Mammary epithelial cell (primary cell): ENCODE measurements at regions of chr14 and their contacts with region 1.

Region 1: GRCh38 chr14:65804752-65805473 is 392.4 kb downstream of the FUT8 start:
- DNase-seq: no peak
- H3K4me3 ChIP-seq: no peak overlapping the region
- H3K27ac ChIP-seq: no peak overlapping the region
- H3K4me1 ChIP-seq: no peaks in the 10 kb centered on the region
- H3K27me3 ChIP-seq: peaks cover 2% of the 10 kb centered on the region
- CTCF ChIP-seq: no peak

Region 2: DNA sequence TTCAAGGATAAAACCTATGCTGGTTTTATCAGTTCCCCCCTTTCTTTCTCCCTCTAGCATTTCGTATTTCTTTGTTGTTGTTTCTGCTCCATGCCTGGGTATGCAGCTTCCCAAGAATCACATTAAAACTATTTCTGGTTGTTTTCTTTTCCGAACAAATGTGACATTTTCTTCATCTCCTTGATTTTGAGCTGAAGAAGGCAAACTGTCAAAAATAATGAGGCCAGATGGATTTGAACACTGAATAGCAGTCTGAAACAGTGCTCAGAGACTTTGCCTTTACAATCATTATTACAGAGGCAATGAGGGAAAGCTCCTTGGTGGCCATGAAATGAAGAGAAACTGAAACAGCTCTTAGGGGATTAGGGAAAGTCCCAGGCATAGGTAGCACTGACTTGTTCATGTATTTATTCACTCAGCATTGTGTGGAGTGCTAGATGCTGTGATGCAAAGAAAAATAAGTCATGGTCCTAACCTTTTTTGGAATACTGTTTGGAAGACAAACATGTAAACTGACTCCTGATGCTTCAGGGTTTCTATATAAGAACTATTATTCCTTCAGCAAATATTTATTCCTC is 72.9 kb before region 1 on chr14:
- CTCF ChIA-PET with region 1: no interaction called
- dilution Hi-C with region 1: no loop called
- in situ Hi-C with region 1: no loop called
- intact Hi-C with region 1: no loop called
- DNase-seq: no peak
- H3K4me3 ChIP-seq: no peak overlapping the region
- H3K27ac ChIP-seq: no peak overlapping the region
- H3K4me1 ChIP-seq: no peaks in the 10 kb centered on the region
- H3K27me3 ChIP-seq: no peaks in the 10 kb centered on the region
- CTCF ChIP-seq: no peak

Region 3: DNA sequence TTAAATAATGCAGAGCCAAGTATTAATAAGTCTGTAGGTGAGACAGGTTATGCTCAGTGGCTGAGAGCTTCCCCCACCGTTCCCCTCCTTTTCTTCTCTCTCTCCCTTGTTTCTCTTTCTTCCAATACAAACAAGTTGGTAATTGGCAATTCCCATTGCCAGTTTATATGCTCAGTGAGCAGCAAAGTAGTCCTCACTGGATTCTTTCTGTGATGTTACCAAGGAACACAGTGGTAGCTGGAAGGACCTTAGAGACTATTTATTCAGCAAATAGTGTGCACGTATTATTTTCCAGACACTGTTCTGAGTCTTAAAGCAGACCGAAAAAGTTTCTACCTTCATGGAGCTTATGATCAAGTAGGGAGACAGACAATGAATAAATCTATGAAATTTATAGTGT is 48.0 kb before region 1 on chr14:
- CTCF ChIA-PET with region 1: no interaction called
- dilution Hi-C with region 1: loop called (anchors 5 kb)
- in situ Hi-C with region 1: no loop called
- intact Hi-C with region 1: no loop called
- DNase-seq: no peak
- H3K4me3 ChIP-seq: no peak overlapping the region
- H3K27ac ChIP-seq: no peak overlapping the region
- H3K4me1 ChIP-seq: no peaks in the 10 kb centered on the region
- H3K27me3 ChIP-seq: peaks cover 3% of the 10 kb centered on the region
- CTCF ChIP-seq: no peak